ENCODE measurements at regions of chr22 and their contacts with region 1.

Region 1: DNA sequence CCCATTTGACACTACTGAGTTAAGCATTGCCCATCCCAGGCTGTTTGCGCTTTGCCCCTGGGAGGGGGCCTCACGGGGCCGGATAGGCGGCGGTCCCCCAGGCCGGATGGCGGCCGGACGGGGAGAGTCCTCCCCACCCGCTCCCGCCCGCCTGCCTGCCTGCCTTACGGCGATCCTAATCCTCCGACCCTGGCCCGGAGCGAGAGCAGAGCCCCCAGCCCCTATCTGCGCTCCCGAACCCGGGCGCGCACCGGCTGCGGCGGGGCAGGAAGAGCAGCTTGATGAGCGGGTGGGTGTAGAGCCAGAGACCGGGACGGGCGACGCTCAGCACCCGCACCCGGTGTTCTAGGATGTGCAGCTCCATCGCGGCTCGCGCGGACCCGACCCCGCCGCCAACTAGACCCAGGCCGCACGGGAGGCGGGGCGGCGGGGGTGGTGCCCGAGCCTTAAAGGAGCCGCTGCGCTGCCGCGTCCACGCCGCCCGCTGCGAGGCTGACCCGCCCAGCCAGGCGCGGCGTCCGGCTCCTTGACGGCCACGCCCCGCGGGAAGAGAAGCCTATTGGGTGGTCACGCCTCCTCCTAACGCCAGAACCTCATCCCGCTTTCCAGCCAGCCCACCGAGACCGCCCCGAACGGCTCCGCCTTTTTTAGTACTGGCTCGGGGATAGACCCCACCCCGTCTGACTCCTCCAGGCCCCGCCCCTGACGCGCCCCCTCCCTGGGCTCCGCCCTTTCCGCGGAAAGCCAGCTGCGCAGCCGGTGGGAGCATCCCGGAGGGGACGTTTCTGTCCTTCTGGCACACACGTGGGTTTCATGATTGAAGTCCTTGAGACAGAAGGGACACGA is at the start of gene CASTOR1:
- DNase-seq: peak; percentile 96
- ATAC-seq: peak; percentile 74 to 80
- H3K4me3 ChIP-seq: peak within 1 kb of the TSS; percentile 72
- H3K27ac ChIP-seq: peak within 1 kb of the TSS; percentile 76 to 92
- H3K4me1 ChIP-seq: peaks cover 40% of the 10 kb centered on the region
- CTCF ChIP-seq: no peak
- EP300 ChIP-seq: no peak
- POLR2A ChIP-seq: peak; percentile 36; the same call in 1 of the 2 replicates
- RAD21 ChIP-seq: no peak
- polyA plus RNA-seq, gene CASTOR1: 11.3 and 12.2 TPM in 2 replicates

Region 2: DNA sequence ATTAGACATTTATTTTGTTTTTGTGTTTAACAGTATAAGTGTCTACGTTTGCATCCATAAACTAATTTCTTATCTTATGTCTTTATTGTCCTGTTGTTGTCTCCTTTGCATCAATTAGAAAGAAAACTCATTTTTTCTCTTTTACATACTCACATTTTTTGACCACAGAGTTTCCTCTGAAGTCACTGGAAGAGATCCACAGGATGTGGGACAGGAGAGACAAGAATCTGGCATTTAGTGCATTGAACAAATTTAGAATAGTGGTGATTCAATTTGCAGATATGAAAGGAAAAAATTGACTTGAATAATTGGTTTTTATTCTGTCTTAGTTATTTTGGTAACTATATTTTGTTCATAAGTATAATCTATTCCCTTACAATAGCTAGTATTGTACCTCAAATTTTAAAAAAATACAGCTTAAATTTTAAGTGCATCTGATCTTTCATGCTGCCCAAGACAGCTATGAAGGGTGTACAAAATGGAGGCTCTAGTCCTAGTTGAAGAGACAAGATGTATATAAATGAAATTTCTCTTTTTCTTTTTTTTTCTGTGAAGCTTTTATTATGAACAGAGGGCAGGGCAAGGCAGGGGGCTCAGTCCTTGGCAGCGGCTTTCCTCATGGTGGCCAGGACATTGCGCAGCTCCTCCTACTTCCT is 184.7 kb before region 1 on chr22:
- CTCF ChIA-PET with region 1: interaction called, 34 read pairs
- POLR2A ChIA-PET with region 1: no interaction called
- DNase-seq: no peak
- ATAC-seq: no peak
- H3K4me3 ChIP-seq: no peak overlapping the region
- H3K27ac ChIP-seq: peak overlapping the region in 1 of 2 experiments; percentile 72; a peak in 4 of 6 replicates
- H3K4me1 ChIP-seq: peaks cover 29% of the 10 kb centered on the region
- CTCF ChIP-seq: no peak
- EP300 ChIP-seq: no peak
- POLR2A ChIP-seq: no peak
- RAD21 ChIP-seq: no peak

Region 3: DNA sequence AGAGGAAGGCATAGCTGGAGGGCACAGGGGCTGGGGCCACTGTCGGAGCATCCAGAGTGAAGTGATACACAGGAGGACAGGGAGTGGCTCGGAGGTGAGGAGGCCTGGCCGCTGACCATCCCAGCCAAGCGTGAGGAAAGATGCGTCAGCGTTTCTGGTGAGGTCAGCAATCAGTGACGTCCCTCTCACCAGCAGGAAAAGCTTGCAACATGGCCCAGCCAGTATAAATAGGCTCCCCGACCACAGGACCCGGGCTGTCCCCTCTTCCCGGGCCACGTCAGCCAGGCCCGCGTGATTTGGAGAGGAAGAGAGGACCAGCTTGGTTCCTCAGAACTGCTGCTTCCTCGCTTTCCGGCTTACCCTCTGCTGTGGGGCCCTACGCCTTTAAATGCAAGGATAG is 18.5 kb before region 1 on chr22:
- CTCF ChIA-PET with region 1: interaction called, 17 read pairs
- POLR2A ChIA-PET with region 1: no interaction called
- DNase-seq: no peak
- ATAC-seq: peak in 1 of 2 experiments; percentile 15; a peak in 2 of 6 replicates
- H3K4me3 ChIP-seq: no peak overlapping the region
- H3K27ac ChIP-seq: 0 out of 6 replicates have a peak overlapping the region, but pooled peaks of 1 of the 2 experiments have one; percentile 24
- H3K4me1 ChIP-seq: no peaks in the 10 kb centered on the region
- CTCF ChIP-seq: no peak
- EP300 ChIP-seq: no peak
- POLR2A ChIP-seq: no peak
- RAD21 ChIP-seq: no peak

Region 4: GRCh38 chr22:30301995-30302809 is 12.8 kb after region 1 on chr22:
- CTCF ChIA-PET with region 1: interaction called, 17 read pairs
- POLR2A ChIA-PET with region 1: no interaction called
- DNase-seq: no peak
- ATAC-seq: peak in 1 of 2 experiments; percentile 21; a peak in 1 of 6 replicates
- H3K4me3 ChIP-seq: no peak overlapping the region
- H3K27ac ChIP-seq: peak overlapping the region in 1 of 2 experiments; percentile 2; a peak in 2 of 6 replicates
- H3K4me1 ChIP-seq: peaks cover 9% of the 10 kb centered on the region
- CTCF ChIP-seq: no peak
- EP300 ChIP-seq: no peak
- POLR2A ChIP-seq: no peak
- RAD21 ChIP-seq: no peak

Region 5: GRCh38 chr22:30326706-30327362 is 37.5 kb after region 1 on chr22 and contains the start of gene TBC1D10A:
- CTCF ChIA-PET with region 1: interaction called, 20 read pairs
- POLR2A ChIA-PET with region 1: interaction called, 5 read pairs
- DNase-seq: peak; percentile 80 to 87
- ATAC-seq: peak; percentile 80 to 86
- H3K4me3 ChIP-seq: peak within 1 kb of the TSS; percentile 78
- H3K27ac ChIP-seq: peak within 1 kb of the TSS; percentile 74 to 96
- H3K4me1 ChIP-seq: peaks cover 24% of the 10 kb centered on the region
- CTCF ChIP-seq: no peak
- EP300 ChIP-seq: no peak
- POLR2A ChIP-seq: peak; percentile 20; the same call in 1 of the 2 replicates
- RAD21 ChIP-seq: no peak
- polyA plus RNA-seq, gene TBC1D10A: 5.4 and 5.8 TPM in 2 replicates

Region 6: DNA sequence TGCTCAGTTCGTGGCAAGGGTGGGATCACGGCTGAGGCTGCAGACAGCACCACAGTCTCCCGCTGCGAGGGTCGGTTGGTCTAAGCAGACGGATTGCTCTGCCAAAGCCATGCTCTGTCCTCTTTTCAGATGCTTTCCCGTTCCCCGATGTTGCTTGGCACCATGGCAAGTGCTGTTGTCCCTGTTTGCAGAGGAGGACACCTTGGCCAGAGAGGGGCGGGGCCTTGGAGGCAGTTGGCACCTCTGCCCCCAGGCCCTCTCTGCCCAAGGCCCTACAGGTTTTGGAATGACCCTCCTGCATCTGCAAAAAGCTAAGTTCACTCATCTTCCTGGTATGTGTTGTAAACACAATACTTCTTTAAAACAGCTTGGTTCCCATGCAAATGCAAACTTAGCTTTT is 79.1 kb after region 1 on chr22:
- CTCF ChIA-PET with region 1: interaction called, 11 read pairs
- POLR2A ChIA-PET with region 1: no interaction called
- DNase-seq: no peak
- ATAC-seq: no peak
- H3K4me3 ChIP-seq: no peak overlapping the region
- H3K27ac ChIP-seq: no peak overlapping the region
- H3K4me1 ChIP-seq: no peaks in the 10 kb centered on the region
- CTCF ChIP-seq: no peak
- EP300 ChIP-seq: no peak
- POLR2A ChIP-seq: no peak
- RAD21 ChIP-seq: no peak

Region 7: GRCh38 chr22:30396871-30397655 is 107.7 kb after region 1 on chr22 and contains the start of gene SEC14L2:
- CTCF ChIA-PET with region 1: interaction called, 11 read pairs
- POLR2A ChIA-PET with region 1: no interaction called
- DNase-seq: peak; percentile 33 to 55
- ATAC-seq: peak; percentile 80 to 88
- H3K4me3 ChIP-seq: peak within 1 kb of the TSS; percentile 76
- H3K27ac ChIP-seq: peak within 1 kb of the TSS; percentile 81 to 98
- H3K4me1 ChIP-seq: peaks cover 18% of the 10 kb centered on the region
- CTCF ChIP-seq: no peak
- EP300 ChIP-seq: no peak
- POLR2A ChIP-seq: peak; percentile 38; the same call in 1 of the 2 replicates
- RAD21 ChIP-seq: no peak
- polyA plus RNA-seq, gene SEC14L2: 12.5 and 12.8 TPM in 2 replicates

Measured in A549 (cell line).